GM13976 (cell line): ENCODE measurements at regions of chrX and their contacts with region 1.

Region 1: DNA sequence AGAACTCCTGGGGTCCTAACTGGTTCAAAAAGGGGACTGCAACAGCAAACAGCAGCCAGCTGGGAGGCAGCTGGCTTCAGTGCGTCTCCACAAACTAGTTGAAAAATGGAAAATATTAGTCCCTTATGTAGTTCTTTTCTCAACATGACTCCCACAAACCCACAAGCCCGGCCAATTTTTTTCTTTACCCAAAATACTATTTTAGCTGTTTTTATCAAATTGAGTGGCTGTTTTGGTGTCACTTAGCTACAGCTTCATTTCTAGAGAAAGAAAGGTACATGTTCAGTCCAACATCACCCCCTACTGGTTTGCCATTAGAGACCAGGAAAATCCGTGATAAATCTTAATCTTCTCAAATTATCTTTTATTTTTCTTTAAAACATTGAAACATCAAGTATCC is 97.2 kb downstream of the GUCY2F start:
- DNase-seq: no peak
- CTCF ChIP-seq: peak; percentile 30

Region 2: GRCh38 chrX:108584617-108585211 is 800.0 kb before region 1 on chrX:
- in situ Hi-C with region 1: loop called (anchors 25 kb)
- DNase-seq: peak; percentile 2
- CTCF ChIP-seq: peak; percentile 50

Region 3: DNA sequence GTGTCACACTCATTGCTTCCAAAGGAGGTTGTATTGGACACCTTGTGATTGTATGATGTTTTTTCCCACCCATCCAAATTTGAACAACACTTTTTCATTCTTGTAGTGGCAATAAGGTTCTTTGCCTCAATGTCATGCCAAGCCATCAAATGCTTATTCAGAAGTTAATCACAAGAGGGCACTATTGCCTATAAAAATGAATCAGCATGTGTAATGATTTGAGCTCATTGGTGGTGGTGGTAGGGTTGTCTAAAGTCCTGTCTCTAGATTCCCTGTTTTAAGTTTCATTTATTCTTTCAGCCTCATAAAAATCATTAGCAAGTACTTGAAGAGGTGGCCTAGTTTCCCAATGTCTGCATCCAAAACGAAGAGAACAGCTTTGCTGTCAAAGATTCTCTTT is 685.3 kb before region 1 on chrX:
- in situ Hi-C with region 1: loop called (anchors 25 kb)
- DNase-seq: peak; percentile 3
- CTCF ChIP-seq: peak; percentile 36

Region 4: DNA sequence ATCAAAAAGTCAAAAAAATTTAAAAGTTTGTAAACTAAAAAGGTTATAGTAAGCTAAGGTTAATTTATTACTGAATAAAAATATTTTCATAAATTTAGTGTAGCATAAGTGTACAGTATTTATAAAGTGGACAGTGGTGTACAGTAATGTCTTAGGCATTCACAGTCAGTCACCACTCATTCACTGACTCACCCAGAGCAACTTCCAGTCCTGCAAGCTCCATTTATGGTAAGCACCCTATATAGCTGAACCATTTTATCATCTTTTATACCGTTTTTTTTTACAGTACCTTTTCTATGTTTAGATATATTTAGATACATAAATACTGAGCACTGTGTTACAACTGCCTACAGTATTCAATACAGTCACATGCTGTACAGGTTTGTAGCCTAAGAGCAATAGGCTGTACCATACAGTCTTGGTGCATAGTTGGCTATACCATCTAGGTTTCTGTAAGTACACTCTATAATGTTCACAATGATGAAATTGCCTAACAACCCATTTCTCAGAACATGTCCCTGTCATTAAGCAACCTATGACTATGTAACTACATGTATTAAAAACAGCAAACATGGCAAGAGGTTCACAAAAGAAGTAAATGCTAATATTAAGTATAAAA is 329.8 kb after region 1 on chrX:
- in situ Hi-C with region 1: no loop called
- DNase-seq: no peak
- CTCF ChIP-seq: no peak